Right cardiac atrium (tissue), 5 donors: ENCODE measurements at regions of chr20 and their contacts with region 1.

Region 1: GRCh38 chr20:50575847-50576720 is 65.9 kb downstream of the PTPN1 start:
- DNase-seq: peak; percentile 66 to 91 (median 87)
- ATAC-seq: peak; percentile 58 to 63
- H3K4me3 ChIP-seq: no peak overlapping the region
- H3K27ac ChIP-seq: no peak overlapping the region
- H3K4me1 ChIP-seq: peaks cover 14% of the 10 kb centered on the region
- H3K27me3 ChIP-seq: no peaks in the 10 kb centered on the region

Region 2: DNA sequence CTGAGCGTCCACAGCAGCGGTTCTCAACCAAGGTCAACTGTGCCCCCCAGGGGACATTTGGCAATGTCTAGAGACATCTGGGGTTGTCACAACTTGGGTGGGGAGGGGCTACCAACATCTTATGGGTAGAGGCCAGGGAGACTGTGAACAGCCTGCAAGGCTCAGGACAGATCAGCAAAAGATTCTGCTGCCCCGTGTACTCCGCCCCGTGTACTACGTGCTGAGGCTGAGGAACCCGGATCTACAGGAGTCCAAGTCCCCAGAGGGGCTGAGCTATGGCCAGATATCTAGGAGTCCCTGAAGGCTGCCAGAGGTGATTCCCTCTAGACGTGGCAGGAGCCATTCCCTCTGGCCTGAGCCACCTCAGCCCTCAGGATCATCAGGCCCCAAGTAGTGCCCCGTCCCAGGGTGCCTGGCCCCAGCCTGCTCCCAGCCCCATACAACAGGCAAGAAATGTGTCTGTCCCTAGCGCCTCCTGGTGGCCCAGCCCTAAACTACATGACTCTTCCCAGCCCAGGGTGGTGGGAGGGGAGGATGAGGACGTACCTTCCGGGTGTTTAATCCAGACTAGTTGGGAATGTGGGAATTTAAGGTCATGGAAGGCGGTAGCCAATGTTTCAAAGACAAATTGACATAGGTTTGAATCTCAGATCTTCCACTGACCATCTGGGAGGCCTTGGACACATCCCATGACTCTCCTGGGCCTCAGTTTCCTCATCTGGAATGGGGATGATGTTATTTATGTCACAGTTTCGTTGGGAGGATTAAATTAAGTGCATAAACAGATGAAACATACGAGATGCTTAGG is 115.4 kb before region 1 on chr20:
- intact Hi-C with region 1: loop called in 2 of 4 experiments (anchors 5 kb)
- DNase-seq: peak; percentile 89 to 97 (median 94)
- ATAC-seq: peak; percentile 87
- H3K4me3 ChIP-seq: no peak overlapping the region
- H3K27ac ChIP-seq: no peak overlapping the region
- H3K4me1 ChIP-seq: peaks cover 4% of the 10 kb centered on the region
- H3K27me3 ChIP-seq: no peaks in the 10 kb centered on the region

Region 3: DNA sequence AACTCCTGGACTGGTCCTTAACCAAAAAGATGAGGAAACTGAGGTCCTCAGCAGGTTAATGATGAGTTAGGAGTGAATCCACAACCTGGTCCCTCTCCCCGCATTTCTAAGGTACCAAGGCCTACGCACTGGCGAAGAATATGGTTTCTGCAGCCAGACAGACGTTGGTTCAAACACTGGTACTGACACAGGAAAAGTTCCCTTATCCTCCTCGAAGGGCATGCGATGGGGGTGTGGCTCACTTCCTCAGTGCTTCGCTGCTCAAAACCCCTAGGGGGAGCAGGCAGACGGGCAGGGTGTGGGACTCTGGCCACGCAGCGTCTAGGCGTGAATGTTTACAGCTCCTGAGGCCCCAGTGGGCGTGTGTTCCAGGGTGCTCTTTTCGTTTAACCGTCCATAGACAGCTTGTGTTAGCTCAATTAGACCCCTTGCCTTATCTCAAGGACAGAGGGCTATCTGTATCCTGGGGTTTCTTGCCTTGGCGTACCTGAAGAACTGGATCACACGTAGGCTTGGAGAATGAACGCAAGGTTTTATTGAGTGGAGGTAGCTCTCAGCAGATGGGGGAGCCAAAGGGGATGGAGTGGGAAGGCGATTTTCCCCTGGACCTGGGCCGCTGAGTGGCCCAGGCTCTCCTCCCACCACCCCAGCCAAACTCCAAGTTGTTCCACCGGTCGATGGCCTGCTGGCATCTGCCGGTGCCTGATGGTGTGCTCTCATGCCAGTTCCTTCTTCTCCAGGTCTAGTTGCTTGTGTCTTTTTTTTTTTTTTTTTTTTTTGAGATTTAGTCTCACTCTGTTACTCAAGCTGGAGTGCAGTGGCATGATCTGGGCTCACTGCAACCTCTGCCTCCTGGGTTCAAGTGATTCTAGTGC is 97.7 kb before region 1 on chr20:
- intact Hi-C with region 1: loop called in 3 of 4 experiments (anchors 5 to 10 kb)
- DNase-seq: peak; percentile 60 to 79 (median 77)
- ATAC-seq: peak; percentile 71 to 83
- H3K4me3 ChIP-seq: no peak overlapping the region
- H3K27ac ChIP-seq: no peak overlapping the region
- H3K4me1 ChIP-seq: no peaks in the 10 kb centered on the region
- H3K27me3 ChIP-seq: no peaks in the 10 kb centered on the region

Region 4: GRCh38 chr20:50484276-50484976 is 91.7 kb before region 1 on chr20:
- intact Hi-C with region 1: loop called in 3 of 4 experiments (anchors 5 to 10 kb)
- DNase-seq: no peak
- ATAC-seq: no peak
- H3K4me3 ChIP-seq: peak overlapping the region; percentile 75
- H3K27ac ChIP-seq: peak overlapping the region; percentile 22
- H3K4me1 ChIP-seq: no peaks in the 10 kb centered on the region
- H3K27me3 ChIP-seq: no peaks in the 10 kb centered on the region

Region 5: DNA sequence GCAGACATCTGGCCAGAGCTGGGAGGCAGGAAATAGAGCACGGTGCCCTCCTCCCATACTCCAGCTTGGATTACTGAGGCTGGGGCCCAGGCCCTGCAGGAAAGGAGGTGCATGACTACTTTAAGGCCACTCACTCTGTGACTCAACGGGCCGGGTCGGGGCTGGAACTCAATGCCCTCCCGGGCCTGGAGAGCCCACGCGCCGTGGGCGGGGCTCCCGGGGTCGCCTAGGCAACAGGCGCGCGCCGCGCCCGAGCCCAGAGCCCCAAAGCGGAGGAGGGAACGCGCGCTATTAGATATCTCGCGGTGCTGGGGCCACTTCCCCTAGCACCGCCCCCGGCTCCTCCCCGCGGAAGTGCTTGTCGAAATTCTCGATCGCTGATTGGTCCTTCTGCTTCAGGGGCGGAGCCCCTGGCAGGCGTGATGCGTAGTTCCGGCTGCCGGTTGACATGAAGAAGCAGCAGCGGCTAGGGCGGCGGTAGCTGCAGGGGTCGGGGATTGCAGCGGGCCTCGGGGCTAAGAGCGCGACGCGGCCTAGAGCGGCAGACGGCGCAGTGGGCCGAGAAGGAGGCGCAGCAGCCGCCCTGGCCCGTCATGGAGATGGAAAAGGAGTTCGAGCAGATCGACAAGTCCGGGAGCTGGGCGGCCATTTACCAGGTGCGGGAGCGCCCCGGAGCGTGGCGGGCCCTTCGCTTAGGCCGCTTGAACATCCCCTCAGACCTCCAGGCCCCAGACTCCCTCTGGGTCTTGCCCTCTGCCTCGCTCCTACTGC is 66.0 kb before region 1 on chr20 and contains the start of gene PTPN1:
- intact Hi-C with region 1: loop called (anchors 5 to 10 kb)
- DNase-seq: peak; percentile 99
- ATAC-seq: peak; percentile 99
- H3K4me3 ChIP-seq: peak within 1 kb of the TSS; percentile 94
- H3K27ac ChIP-seq: peak within 1 kb of the TSS; percentile 93
- H3K4me1 ChIP-seq: peaks cover 8% of the 10 kb centered on the region
- H3K27me3 ChIP-seq: no peaks in the 10 kb centered on the region
- total RNA-seq, gene PTPN1: 22.5 to 37.4 (median 27.2) TPM

Region 6: GRCh38 chr20:50724851-50725721 is 149.0 kb after region 1 on chr20:
- intact Hi-C with region 1: no loop called
- DNase-seq: peak; percentile 60 to 75 (median 74)
- ATAC-seq: peak; percentile 69 to 88
- H3K4me3 ChIP-seq: no peak overlapping the region
- H3K27ac ChIP-seq: peak overlapping the region; percentile 28
- H3K4me1 ChIP-seq: peaks cover 2% of the 10 kb centered on the region
- H3K27me3 ChIP-seq: no peaks in the 10 kb centered on the region